CD4-positive, alpha-beta T cell (primary cell): ENCODE measurements at regions of chr13 and their contacts with region 1.

Region 1: DNA sequence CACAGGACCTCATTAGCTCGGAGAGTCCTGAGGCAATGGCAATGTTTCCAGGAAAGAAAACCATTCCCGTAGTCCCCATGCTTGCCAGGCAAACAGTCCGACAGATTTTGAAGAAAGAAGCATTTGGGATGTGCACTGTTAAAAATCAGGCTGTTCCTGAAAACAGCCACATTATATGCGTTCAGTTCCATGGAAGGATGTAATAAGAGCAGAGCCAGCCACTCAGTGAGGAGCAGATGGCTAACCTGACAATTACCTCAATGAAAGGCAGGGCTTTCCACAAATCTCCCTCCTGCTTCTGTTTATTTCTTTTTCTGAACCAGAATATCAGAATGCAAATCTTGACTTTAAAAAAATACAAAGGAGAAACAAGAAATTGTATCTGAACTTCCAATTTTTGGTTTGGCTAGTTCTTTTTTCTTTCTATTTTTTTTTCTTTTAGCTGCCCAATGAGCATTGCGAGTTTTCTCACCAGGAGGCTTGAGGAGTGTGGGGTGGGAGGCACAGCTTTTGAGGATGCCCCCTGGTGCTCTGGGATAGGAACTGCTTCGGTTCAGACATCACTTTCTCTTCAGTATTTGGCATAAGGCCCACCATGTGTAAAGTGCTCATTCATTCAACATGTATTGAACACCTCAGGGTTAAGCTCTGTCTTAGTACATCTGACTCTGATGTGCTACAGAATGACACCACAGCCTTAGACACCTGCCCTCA is 124.2 kb downstream of the TBC1D4 start:
- DNase-seq: peak; percentile 23 to 81 (median 44)
- ATAC-seq: peak; percentile 100
- H3K4me3 ChIP-seq: no peak overlapping the region
- H3K4me3 Mint-ChIP-seq: no peak overlapping the region
- H3K27ac ChIP-seq: no peak overlapping the region
- H3K27ac Mint-ChIP-seq: no peak overlapping the region
- H3K4me1 ChIP-seq: no peaks in the 10 kb centered on the region
- H3K4me1 Mint-ChIP-seq: peaks cover 4% of the 10 kb centered on the region
- H3K27me3 ChIP-seq: no peaks in the 10 kb centered on the region
- H3K27me3 Mint-ChIP-seq: no peaks in the 10 kb centered on the region
- CTCF ChIP-seq: peak; percentile 83

Region 2: DNA sequence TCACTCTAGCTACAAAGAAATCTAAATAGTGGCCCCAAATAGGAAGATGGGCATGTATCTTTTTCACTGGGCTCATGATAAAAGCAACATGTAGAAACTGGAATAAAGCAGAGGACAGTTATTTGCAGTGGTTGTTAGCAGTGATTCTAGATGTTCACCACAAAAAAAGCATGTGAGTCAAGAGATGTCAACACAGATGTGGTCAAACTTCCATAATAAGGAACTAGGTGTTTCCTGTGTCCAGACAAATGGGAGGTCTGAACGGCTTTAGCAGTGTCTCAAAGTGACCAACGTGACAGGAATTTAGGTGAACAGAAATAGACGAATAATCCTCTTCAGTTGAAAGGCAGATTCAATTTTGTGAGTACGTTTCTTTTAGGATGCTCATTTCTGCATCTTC is 38.5 kb before region 1 on chr13:
- CTCF ChIA-PET with region 1: interaction called, 5 read pairs
- POLR2A ChIA-PET with region 1: interaction called, 3 read pairs
- intact Hi-C with region 1: loop called (anchors 5 kb)
- DNase-seq: peak in 1 of 14 experiments; percentile 17
- ATAC-seq: no peak
- H3K4me3 ChIP-seq: no peak overlapping the region
- H3K4me3 Mint-ChIP-seq: no peak overlapping the region
- H3K27ac ChIP-seq: no peak overlapping the region
- H3K27ac Mint-ChIP-seq: peak overlapping the region; percentile 74
- H3K4me1 ChIP-seq: peaks cover 7% of the 10 kb centered on the region
- H3K4me1 Mint-ChIP-seq: peaks cover 79% of the 10 kb centered on the region
- H3K27me3 ChIP-seq: no peaks in the 10 kb centered on the region
- H3K27me3 Mint-ChIP-seq: no peaks in the 10 kb centered on the region
- CTCF ChIP-seq: no peak

Region 3: DNA sequence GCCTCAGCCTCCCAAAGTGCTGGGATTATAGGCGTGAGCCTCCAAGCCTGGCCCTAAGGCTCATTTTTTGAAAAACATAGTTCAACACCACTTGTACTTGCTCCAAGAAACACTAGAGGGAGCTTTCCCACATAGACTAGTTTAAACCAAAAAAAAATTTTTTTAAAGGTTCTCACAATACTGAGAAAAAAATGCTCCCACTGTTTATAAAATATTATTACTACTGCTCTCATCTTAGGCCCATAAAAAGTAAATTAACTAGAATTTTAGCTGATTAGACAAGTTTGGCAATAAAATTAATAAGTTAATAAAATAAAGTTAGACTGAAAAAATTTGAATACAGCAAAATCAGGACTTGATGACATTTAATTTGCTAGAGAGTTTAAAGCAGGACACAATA is 14.8 kb after region 1 on chr13:
- CTCF ChIA-PET with region 1: interaction called, 12 read pairs
- POLR2A ChIA-PET with region 1: interaction called, 4 read pairs
- intact Hi-C with region 1: no loop called
- DNase-seq: peak in 3 of 14 experiments; percentile 53 to 63 (median 58)
- ATAC-seq: peak; percentile 85
- H3K4me3 ChIP-seq: no peak overlapping the region
- H3K4me3 Mint-ChIP-seq: no peak overlapping the region
- H3K27ac ChIP-seq: no peak overlapping the region
- H3K27ac Mint-ChIP-seq: no peak overlapping the region
- H3K4me1 ChIP-seq: no peaks in the 10 kb centered on the region
- H3K4me1 Mint-ChIP-seq: no peaks in the 10 kb centered on the region
- H3K27me3 ChIP-seq: no peaks in the 10 kb centered on the region
- H3K27me3 Mint-ChIP-seq: no peaks in the 10 kb centered on the region
- CTCF ChIP-seq: peak; percentile 84